ENCODE measurements at regions of chr2 and their contacts with region 1.

Region 1: DNA sequence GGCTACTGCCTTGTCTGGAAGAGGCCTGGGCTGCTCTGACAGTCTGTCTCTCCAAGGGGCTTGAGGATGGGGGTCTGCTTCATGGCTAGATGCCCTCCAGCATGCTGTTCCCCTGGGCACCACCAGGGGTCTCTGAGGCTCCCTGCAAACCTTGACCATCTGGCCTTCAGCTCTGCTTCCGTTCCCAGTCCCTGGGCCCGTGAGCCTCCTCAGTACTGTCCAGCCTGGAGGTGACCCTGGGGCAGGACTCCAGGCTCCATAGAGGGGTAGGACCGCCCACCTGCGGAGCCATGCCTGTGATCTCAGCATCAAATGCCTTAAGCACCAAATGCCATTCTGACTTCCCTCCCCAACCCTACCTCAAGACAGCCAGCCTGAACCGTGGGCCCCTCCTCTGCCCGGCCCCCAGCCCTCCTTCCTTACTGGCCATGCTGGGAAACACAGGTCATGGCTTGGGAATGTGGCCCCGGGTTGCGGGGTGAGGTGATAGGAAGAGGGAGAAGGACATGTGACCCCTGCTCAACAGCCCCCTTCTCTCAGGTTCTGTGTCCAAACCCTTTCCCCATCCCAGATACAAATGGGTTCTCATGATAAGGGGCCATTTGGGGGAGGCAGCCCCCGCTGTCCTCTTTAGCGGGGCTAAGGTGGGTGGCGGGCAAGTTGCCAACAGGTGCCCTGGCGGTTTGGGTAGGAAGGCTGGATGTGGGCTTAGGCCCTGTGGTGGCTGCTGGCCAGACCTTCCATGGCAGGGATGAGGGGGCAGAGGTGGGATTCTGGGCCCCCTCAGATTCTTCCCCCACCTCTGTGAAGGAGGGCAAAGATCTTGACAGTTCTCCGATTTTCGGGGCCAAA is 25.0 kb downstream of the SPEG start:
- DNase-seq: peak; percentile 59 to 89
- ATAC-seq: peak; percentile 67 to 71
- H3K4me3 ChIP-seq: peak overlapping the region in 2 of 4 donors; percentile 32 to 43
- H3K27ac ChIP-seq: peak overlapping the region; percentile 95 to 99 (median 97)
- H3K4me1 ChIP-seq: peaks cover 47 to 49% of the 10 kb centered on the region in 2 donors
- H3K27me3 ChIP-seq: no peaks in the 10 kb centered on the region
- CTCF ChIP-seq: peak; percentile 87 to 96 (median 90)
- POLR2A ChIP-seq: no peak

Region 2: GRCh38 chr2:219484343-219485200 is 24.9 kb after region 1 on chr2:
- in situ Hi-C with region 1: no loop called
- intact Hi-C with region 1: loop called (anchors 2 kb)
- DNase-seq: no peak
- ATAC-seq: no peak
- H3K4me3 ChIP-seq: peak overlapping the region; percentile 6 to 36 (median 14)
- H3K27ac ChIP-seq: peak overlapping the region; percentile 13 to 78 (median 54)
- H3K4me1 ChIP-seq: peaks cover 3 to 21% of the 10 kb centered on the region in 2 donors
- H3K27me3 ChIP-seq: no peaks in the 10 kb centered on the region
- CTCF ChIP-seq: no peak
- POLR2A ChIP-seq: no peak

Region 3: DNA sequence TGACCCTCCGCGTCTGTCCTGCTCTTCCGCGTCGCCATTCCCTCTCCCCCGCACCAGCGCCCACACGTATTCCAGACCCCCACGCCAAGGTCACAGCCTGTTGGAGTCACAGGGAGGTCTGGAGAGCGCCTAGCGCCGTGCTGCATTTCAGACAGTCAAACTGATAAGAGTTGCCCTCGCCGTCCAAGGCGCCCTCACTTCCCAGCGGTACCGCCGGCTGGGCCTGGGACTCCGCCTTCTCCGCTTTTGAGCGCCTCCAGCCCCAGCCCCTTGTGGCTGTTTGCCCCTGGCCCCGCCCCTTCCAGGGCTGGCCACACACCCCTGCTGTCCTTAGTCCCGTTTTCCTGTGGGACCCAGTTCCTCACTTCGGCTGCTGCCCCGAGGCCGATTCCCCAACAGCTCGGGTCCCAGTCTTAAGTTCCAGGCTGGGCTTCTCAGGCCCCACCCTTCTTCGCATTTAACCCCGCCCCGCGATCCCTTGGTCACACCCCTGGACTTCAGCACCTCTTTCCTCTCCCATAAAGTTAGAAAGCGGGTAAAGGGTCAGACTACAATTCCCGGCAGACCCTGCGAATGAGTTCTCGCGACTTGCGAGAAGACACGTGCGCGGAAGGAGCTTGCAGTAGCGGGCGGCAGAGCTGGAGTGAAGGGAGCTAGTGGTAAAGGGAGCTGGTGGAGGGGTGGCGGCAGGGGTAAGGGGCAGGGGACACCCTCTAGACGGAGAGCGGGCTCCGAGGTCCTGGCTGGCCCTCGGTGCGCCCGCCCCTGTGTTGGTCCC is 38.8 kb after region 1 on chr2 and contains the start of gene GMPPA:
- in situ Hi-C with region 1: no loop called
- intact Hi-C with region 1: loop called (anchors 1 kb)
- DNase-seq: peak; percentile 97 to 98
- ATAC-seq: peak; percentile 82 to 88
- H3K4me3 ChIP-seq: peak within 1 kb of the TSS; percentile 66 to 87 (median 74)
- H3K27ac ChIP-seq: peak within 1 kb of the TSS; percentile 91 to 100 (median 96)
- H3K4me1 ChIP-seq: peaks cover 39 to 46% of the 10 kb centered on the region in 2 donors
- H3K27me3 ChIP-seq: no peaks in the 10 kb centered on the region
- CTCF ChIP-seq: peak in 1 of 5 experiments; percentile 25
- POLR2A ChIP-seq: peak; percentile 83 to 89
- total RNA-seq, gene GMPPA: 18.0 to 25.8 (median 24.4) TPM

Region 4: DNA sequence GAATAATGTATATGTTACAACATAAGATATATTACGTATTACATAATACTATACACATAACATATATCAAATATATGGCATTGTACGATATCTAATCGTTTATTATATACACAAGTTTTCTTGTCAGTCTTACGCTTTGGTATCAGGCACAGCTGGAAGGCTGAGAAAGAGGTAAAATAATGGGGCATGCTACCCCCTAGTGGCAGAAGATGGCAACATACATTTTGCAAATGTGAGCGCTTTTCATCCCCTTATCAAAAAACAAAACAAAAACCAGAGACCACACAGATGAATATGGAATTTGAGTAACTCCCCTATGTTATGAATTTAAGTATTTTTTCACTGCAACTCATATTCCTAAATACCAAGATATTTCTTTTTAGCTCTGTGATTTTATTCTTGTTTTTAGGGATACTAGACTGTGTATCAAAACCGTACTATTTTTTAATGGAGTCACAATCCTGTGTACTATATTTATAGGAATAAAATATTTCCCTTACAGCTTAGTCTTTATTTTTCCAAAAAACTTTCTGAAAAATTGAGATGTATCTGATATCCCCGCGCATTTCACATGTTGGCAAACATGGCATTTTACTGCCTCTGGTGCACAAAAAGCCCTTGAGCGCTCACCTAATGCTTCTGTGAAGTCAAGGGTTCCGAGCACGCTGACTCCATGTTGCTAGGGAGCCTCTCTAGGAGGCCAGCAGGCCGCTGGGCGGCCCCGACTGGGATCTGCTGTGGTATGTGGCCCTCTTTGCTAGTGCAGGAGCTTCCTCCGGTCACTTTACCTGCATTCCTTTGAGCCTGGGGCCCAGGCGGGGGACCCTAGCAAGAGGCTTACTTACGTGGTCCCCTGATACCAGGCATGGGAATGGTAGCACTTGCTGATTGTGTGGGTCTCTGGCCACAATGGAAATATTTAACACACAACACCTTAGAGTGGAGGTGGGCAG is 230.3 kb after region 1 on chr2:
- in situ Hi-C with region 1: no loop called
- intact Hi-C with region 1: no loop called
- DNase-seq: no peak
- ATAC-seq: peak; percentile 55 to 65
- H3K4me3 ChIP-seq: no peak overlapping the region
- H3K27ac ChIP-seq: no peak overlapping the region
- H3K4me1 ChIP-seq: peaks cover 4 to 10% of the 10 kb centered on the region in 2 donors
- H3K27me3 ChIP-seq: no peaks in the 10 kb centered on the region
- CTCF ChIP-seq: peak; percentile 59 to 81 (median 70)
- POLR2A ChIP-seq: no peak

Region 5: DNA sequence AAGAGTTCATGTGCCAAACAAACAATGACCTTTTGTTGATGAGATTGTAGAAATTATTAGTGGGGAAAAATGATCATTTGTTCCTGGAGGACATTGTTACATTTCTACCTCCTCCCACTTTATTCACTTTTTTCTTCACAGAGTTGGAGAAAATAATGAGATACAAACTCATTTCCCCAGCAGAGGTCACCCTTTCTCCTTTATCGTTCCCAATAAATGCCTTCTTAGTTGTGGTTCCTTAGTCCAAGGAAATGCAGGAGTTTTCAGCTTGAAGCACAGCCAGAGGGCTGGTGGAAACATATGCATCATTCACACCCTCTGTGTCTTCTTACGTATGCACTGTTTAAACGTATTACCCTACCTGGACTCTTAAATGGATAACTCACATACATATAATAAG is 276.5 kb after region 1 on chr2:
- in situ Hi-C with region 1: no loop called
- intact Hi-C with region 1: no loop called
- DNase-seq: no peak
- ATAC-seq: peak in 1 of 2 donors; percentile 23
- H3K4me3 ChIP-seq: no peak overlapping the region
- H3K27ac ChIP-seq: no peak overlapping the region
- H3K4me1 ChIP-seq: peaks cover 0 to 5% of the 10 kb centered on the region in 2 donors
- H3K27me3 ChIP-seq: no peaks in the 10 kb centered on the region
- CTCF ChIP-seq: peak in 4 of 5 experiments; percentile 16 to 46 (median 34)
- POLR2A ChIP-seq: no peak